ENCODE measurements at regions of chr12 and their contacts with region 1.

Region 1: DNA sequence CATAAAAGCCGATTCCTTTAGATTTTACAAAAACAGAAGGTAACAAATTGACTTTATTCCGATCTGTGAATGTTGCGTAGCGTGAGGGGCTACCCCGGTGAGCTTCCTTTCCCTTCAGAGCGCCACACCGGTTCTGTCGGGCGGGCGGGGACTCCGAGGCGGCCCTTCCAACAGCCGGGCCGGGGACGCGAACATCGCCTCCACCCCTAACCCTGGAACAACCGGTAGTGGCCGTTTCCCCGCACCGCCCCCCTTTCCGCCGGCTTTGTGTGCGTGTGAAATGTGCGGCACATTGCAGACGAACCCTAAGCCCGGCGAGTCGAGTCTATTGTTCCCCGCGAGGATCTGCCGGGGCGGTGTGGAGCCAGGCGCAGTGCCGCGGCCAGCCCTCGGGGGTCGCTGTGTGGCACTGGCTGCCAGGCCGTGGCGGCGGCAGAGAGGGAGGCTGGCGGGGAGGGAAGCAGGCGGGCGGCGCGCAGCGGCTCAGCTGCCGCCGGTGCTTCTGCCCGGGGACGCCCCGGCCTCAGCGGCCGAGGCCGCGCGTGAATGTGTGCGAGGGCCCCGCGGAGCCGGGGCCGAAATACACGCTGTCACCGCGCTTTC is 775 bp upstream of the ARID2 start:
- DNase-seq: peak; percentile 93 to 98 (median 96)
- H3K4me3 ChIP-seq: peak overlapping the region; percentile 54 to 97 (median 88)
- H3K27ac ChIP-seq: peak overlapping the region; percentile 95 to 100 (median 99)
- H3K27me3 ChIP-seq: no peaks in the 10 kb centered on the region
- CTCF ChIP-seq: peak; percentile 58 to 97 (median 82)

Region 2: GRCh38 chr12:45215419-45216229 is 513.1 kb before region 1 on chr12 and contains the start of gene ANO6:
- intact Hi-C with region 1: loop called in 1 of 2 experiments (anchors 5 kb)
- DNase-seq: peak; percentile 30 to 88 (median 76)
- H3K4me3 ChIP-seq: peak within 1 kb of the TSS; percentile 53 to 91 (median 80)
- H3K27ac ChIP-seq: peak within 1 kb of the TSS; percentile 55 to 96 (median 87)
- H3K27me3 ChIP-seq: no peaks in the 10 kb centered on the region
- CTCF ChIP-seq: peak in 26 of 56 donors; percentile 4 to 44 (median 12)
- total RNA-seq, gene ANO6: 8.5 to 32.7 (median 16.5) TPM

Region 3: DNA sequence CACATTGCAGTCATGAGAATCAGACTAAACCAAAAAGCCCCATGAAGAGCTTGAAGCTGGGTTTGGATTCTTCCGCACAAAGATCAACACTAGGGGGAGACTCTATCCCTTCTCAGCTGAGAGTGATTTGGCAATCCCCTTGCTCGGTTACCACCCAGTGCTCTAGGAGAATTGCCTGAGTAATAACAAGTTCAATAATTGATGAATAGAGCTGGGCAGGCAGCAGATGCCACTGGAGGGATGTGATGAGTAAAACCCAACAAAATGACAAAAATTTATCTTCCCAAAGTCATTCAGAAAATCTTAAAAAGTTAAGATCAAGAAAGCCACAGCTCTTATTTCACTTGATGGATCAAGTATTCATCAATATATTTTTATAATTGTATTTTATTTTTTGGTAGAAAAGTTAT is 184.8 kb before region 1 on chr12:
- intact Hi-C with region 1: loop called (anchors 5 kb)
- DNase-seq: peak in 1 of 10 donors; percentile 29
- H3K4me3 ChIP-seq: peak overlapping the region in 1 of 59 donors; percentile 3
- H3K27ac ChIP-seq: no peak overlapping the region
- H3K27me3 ChIP-seq: no peaks in the 10 kb centered on the region
- CTCF ChIP-seq: peak; percentile 46 to 87 (median 75)

Region 4: DNA sequence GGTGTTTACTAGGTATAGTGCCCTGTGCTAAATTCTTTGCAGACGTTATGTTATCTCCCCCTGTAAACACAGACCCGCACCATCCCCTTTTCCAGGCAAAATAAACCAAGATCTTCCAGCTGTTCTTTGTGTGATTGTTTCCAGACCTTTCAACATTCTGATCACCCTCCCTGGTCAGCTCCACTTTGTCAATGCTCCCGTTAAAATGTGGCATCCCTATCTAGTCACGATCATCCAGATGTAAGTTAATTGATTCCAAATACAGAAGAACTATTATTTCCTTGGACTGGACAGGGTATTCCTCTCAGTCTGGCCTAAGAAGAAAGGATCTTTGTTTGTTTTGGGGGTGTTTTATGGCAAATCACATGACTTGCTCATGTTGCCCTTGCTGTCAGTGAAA is 126.8 kb before region 1 on chr12:
- intact Hi-C with region 1: loop called (anchors 5 kb)
- DNase-seq: no peak
- H3K4me3 ChIP-seq: peak overlapping the region in 4 of 59 donors; percentile 9 to 19 (median 14)
- H3K27ac ChIP-seq: peak overlapping the region in 47 of 59 donors; percentile 2 to 86 (median 61)
- H3K27me3 ChIP-seq: no peaks in the 10 kb centered on the region
- CTCF ChIP-seq: peak in 1 of 56 donors; percentile 17

Region 5: GRCh38 chr12:45745861-45746277 is 17.1 kb after region 1 on chr12:
- intact Hi-C with region 1: no loop called
- DNase-seq: no peak
- H3K4me3 ChIP-seq: no peak overlapping the region
- H3K27ac ChIP-seq: no peak overlapping the region
- H3K27me3 ChIP-seq: no peaks in the 10 kb centered on the region
- CTCF ChIP-seq: peak in 51 of 56 donors; percentile 17 to 67 (median 43)

Region 6: DNA sequence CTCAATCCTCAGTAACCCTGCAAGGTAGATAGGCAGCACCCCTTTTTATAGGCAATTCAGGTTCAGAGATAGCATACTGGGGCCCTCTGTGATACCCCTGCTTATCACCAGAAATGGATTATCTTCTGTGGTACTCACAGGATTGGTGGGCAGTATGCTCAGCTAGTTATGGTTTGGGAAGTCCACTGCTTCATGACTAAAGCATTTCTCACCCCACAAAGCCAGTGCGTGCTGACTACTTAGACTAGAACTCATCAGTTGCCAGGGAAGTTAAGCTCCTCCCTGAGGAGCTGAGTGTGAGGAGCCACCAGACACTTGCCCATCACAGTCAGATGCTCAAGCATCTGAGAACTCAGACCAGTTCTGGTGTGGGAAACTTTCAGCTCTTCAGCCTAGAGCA is 185.4 kb after region 1 on chr12:
- intact Hi-C with region 1: no loop called
- DNase-seq: no peak
- H3K4me3 ChIP-seq: no peak overlapping the region
- H3K27ac ChIP-seq: no peak overlapping the region
- H3K27me3 ChIP-seq: no peaks in the 10 kb centered on the region
- CTCF ChIP-seq: no peak

Measured in dorsolateral prefrontal cortex (tissue), 120 donors.